Posterior vena cava (tissue), 2 donors: ENCODE measurements at regions of chr2 and their contacts with region 1.

Region 1: DNA sequence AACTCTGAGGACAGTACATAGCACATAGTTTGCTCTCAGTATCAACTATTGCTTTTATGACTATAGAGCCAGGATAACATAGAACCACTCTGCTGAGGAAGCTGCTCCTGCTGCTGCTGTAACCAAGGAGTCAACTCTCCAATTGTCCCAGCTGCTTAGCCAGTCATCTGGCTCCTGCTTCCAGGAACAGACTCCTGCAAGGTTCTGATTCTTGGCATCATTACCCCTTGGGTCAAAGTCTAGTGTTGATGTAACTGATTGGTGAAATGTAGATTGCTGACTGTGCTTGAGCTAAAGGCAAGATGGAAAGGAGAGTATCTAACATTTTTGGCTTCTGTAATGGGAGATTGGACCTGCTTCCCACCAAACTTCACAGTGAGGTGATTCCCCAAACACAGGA is 261.9 kb upstream of the FSHR start:
- DNase-seq: no peak

Region 2: GRCh38 chr2:49403637-49404036 is 12.6 kb before region 1 on chr2:
- intact Hi-C with region 1: no loop called
- DNase-seq: no peak

Region 3: DNA sequence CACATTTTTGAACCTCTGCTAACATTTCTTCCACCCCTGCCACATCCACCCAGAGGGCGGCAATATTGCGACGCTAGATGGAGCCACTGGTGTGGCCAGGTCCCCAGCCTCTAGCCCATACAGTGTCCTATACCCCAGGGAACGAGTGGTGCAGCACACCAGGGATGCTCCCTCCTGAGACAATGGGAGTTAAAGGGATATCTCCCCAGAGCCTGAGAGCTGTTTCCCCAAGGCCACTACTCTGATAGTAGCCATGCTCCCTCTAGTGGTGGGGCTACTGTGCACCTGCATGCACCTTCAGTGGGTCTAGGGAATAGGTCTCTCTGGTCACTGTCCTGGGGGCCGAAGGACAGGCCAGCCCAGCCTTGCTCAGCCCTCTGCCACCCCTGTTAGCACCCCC is 74.5 kb after region 1 on chr2:
- intact Hi-C with region 1: loop called in 1 of 2 experiments (anchors 2 kb)
- DNase-seq: no peak